ENCODE measurements at regions of chr7 and their contacts with region 1.

Region 1: GRCh38 chr7:25557379-25557917 is 329.2 kb upstream of the NPVF start:
- DNase-seq: no peak
- H3K4me3 ChIP-seq: no peak overlapping the region
- H3K27ac ChIP-seq: peak overlapping the region in 1 of 2 donors; percentile 38
- H3K4me1 ChIP-seq: peaks cover 21% of the 10 kb centered on the region
- H3K27me3 ChIP-seq: no peaks in the 10 kb centered on the region
- CTCF ChIP-seq: no peak
- POLR2A ChIP-seq: no peak

Region 2: GRCh38 chr7:25402532-25402931 is 154.9 kb before region 1 on chr7:
- intact Hi-C with region 1: loop called (anchors 5 kb)
- DNase-seq: no peak
- H3K4me3 ChIP-seq: no peak overlapping the region
- H3K27ac ChIP-seq: no peak overlapping the region
- H3K4me1 ChIP-seq: no peaks in the 10 kb centered on the region
- H3K27me3 ChIP-seq: no peaks in the 10 kb centered on the region
- CTCF ChIP-seq: no peak
- POLR2A ChIP-seq: no peak

Measured in testis (tissue), 5 donors.